ENCODE measurements at regions of chr11 and their contacts with region 1.

Region 1: GRCh38 chr11:5600374-5600851 is 4.0 kb downstream of the TRIM6 start:
- DNase-seq: peak; percentile 44
- H3K4me3 Mint-ChIP-seq: no peak overlapping the region
- H3K27ac Mint-ChIP-seq: no peak overlapping the region
- H3K4me1 Mint-ChIP-seq: peaks cover 10% of the 10 kb centered on the region
- H3K27me3 Mint-ChIP-seq: peaks cover 2% of the 10 kb centered on the region

Region 2: GRCh38 chr11:4947505-4947904 is 652.9 kb before region 1 on chr11 and contains the start of gene OR51A4:
- intact Hi-C with region 1: no loop called
- DNase-seq: no peak
- H3K4me3 Mint-ChIP-seq: no peak within 1 kb of the TSS
- H3K27ac Mint-ChIP-seq: no peak within 1 kb of the TSS
- H3K4me1 Mint-ChIP-seq: no peaks in the 10 kb centered on the region
- H3K27me3 Mint-ChIP-seq: no peaks in the 10 kb centered on the region
- total RNA-seq, gene OR51A4: not detected in 2 replicates

Region 3: GRCh38 chr11:5631969-5632635 is 31.7 kb after region 1 on chr11:
- intact Hi-C with region 1: loop called (anchors 5 kb)
- DNase-seq: no peak
- H3K4me3 Mint-ChIP-seq: no peak overlapping the region
- H3K27ac Mint-ChIP-seq: peak overlapping the region; percentile 63
- H3K4me1 Mint-ChIP-seq: peaks cover 37% of the 10 kb centered on the region
- H3K27me3 Mint-ChIP-seq: no peaks in the 10 kb centered on the region

Region 4: GRCh38 chr11:5643585-5643984 is 43.2 kb after region 1 on chr11:
- intact Hi-C with region 1: no loop called
- DNase-seq: no peak
- H3K4me3 Mint-ChIP-seq: no peak overlapping the region
- H3K27ac Mint-ChIP-seq: no peak overlapping the region
- H3K4me1 Mint-ChIP-seq: peaks cover 11% of the 10 kb centered on the region
- H3K27me3 Mint-ChIP-seq: no peaks in the 10 kb centered on the region

Measured in activated T-helper 2 cell treated with anti-CD3 and anti-CD28 coated beads, Interferon-gamma antibody, Interleukin-2, Interleukin-4, amounts not matched to agents 10 μg/mL and 5 μg/mL and 100 μg/mL, durations not matched to agents 14 hours and 24 hours and 36 hours (primary cell).